ENCODE measurements at regions of chr2 and their contacts with region 1.

Region 1: GRCh38 chr2:88739985-88740600 is 48.6 kb downstream of the RPIA start:
- DNase-seq: peak; percentile 7
- H3K4me3 ChIP-seq: no peak overlapping the region
- CTCF ChIP-seq: peak; percentile 85

Region 2: DNA sequence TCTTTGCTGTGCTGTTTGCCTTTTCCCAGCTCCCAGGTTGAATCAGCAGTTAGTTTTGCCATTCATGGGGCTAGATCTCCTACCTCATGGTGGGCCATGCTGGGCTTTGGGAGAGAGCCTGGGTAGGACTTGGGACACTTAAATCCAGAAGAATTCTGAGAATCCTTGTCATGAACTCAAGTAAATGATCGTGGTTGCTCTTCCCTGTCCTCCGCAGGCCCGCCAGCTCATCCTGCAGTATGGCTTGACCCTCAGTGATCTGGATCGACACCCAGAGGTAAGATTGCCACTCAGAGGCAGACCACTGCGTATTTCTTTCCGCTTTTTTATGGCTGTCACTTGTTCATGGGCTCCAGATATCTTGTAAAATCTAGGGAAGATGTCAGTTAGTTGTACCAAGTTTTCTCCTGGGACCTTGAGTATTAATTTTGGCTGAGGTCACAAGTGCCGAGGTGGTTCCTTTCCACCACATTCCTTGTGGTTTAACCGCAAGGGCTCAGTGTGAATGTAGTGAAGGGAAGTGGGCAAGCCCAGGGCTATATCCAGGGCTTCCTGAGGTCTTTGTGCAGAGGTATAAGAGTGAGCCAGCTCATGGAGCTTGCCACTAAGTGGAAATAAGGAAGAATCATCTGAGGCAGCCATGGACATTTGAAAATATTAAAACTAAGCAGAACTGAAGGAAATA is 10.9 kb before region 1 on chr2:
- CTCF ChIA-PET with region 1: interaction called, 17 read pairs
- POLR2A ChIA-PET with region 1: no interaction called
- DNase-seq: no peak
- H3K4me3 ChIP-seq: no peak overlapping the region
- CTCF ChIP-seq: no peak

Region 3: DNA sequence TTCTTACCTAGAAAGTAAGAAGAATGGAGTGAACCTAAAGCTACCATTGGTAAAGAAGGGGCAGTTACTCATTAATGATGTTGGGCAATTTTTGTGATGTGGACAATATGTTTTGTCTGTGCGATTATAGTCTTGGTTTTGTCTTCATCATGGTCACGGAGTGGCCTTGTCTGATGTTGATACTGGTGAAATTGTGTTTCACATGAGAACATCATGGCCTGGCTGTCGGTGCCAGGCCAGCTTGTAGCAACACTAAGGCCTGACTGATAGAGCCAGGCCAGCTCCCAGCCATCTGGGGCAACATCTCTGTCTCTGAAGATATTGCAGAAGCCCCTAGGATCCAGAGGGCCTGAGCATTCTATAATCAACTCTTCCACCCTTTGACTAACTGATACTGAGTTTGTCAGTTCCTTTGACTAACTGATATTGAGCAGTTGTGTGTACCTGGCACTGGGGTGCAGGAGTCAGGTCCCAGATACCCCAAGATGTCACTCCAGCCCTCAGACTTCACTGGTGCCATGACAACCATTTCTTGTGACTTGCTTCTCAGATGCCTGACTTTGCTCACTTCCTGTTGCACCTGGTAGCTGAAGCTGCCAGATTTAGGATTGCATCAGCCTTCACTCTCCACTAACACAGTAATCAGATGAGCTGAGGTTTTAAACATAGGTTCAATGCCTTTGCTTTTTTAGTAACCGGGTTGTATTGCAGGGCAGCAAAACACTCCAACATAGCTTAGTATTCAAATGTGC is 13.9 kb after region 1 on chr2:
- CTCF ChIA-PET with region 1: interaction called, 49 read pairs
- POLR2A ChIA-PET with region 1: no interaction called
- DNase-seq: no peak
- H3K4me3 ChIP-seq: no peak overlapping the region
- CTCF ChIP-seq: no peak

Region 4: DNA sequence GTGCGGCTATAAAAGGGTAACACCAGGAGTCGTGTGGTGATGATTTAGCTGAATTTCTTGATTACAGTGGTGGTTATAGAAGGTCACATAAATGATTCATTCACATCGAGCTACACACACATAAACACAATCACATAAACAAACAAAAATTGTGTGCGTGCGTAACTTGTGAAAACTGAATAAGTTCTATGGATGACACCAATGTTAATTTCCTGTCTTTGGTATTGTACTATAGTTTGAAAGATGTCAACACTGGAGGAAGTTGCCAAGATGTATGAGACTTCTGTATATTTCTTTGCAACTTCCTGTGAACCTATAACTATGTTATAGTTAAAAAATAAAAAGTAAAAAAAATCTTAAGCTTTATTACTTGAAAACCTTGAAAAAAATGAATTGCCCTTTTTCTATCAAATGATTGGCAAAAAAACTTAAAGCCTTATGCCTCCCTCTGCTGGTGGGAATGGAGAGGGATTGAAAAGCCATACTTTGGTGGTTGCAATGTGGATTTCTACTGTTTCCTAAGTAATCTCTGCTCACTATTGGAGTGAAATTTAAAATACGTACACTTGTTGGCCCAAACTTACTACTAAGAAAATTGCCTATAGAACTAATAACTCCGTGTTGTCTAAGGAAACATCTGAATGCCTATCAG is 179.1 kb after region 1 on chr2:
- CTCF ChIA-PET with region 1: interaction called, 18 read pairs
- POLR2A ChIA-PET with region 1: no interaction called
- DNase-seq: no peak
- H3K4me3 ChIP-seq: no peak overlapping the region
- CTCF ChIP-seq: peak; percentile 53